Common myeloid progenitor, CD34-positive (primary cell): ENCODE measurements at regions of chr5 and their contacts with region 1.

Region 1: DNA sequence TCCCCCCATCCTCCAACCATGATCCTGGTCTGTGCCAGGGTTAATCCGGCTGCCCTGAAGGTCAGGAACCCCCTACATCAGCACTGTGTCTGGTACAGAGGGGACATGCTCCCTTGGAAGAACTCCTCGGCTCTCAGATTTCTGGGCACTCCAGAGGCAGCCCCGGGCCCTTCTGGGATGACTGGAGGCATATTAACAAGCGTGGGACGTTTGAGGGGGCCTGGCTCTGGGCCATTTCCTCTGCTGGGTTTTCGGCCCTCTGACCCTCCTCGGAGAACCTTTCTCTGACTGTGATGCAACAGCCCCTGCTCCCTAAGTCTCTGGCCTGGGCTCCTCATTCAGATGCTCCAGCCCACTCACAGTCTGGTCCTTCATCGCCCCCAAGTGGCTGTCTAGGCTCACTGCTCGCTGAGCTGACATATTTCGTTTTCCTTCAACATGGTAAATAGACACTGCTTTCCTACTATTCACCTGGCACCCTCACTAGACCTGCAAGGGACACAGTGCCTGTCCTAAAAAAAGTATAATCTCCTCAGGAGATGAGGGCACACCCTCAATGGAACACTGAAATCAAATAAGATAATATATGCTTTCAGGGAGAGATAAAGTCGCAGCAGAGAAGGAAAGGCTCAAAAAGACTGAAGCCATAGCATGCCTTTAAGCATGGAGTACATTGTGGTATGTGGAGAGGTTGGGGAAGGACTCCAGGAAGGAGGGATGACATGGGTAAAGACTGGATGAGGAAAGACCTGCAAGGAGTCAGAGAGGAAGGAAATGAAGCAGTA is 404.7 kb upstream of the TRPC7 start:
- DNase-seq: peak; percentile 40 to 74 (median 67)
- H3K4me3 ChIP-seq: no peak overlapping the region
- H3K27ac ChIP-seq: no peak overlapping the region
- H3K4me1 ChIP-seq: no peaks in the 10 kb centered on the region
- H3K27me3 ChIP-seq: peaks cover 0 to 15% (median 0%) of the 10 kb centered on the region in 5 experiments

Region 2: DNA sequence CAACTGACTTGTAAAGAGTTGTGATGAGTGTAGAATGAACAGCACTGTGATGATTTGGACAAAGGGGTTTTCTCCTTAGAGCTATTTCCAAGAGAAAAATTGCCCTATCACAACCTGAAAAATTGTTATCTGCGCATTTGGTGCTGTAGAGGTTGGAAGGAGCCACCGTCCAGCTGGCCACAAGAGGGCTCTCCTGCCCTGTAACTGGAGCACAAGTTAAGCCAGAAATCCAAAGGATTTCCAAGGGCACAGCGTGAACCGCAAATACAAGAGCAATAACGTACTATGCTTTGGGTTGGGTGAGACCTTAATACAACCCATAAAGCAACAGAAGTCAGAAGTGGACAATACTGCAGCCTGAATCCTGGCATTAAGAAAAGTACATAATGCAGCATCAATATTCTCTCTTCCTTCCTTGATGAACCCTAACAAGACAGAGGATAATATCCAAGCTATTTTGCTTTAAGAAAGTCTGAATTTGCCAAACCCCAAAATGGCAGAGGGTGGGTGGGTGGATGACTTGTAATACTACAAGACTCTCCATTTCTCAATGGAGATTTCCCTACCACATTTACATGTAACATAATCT is 520.3 kb before region 1 on chr5:
- CTCF ChIA-PET with region 1: interaction called, 33 read pairs
- POLR2A ChIA-PET with region 1: no interaction called
- DNase-seq: peak; percentile 29 to 57 (median 52)
- H3K4me3 ChIP-seq: no peak overlapping the region
- H3K27ac ChIP-seq: no peak overlapping the region
- H3K4me1 ChIP-seq: no peaks in the 10 kb centered on the region
- H3K27me3 ChIP-seq: peaks cover 0 to 6% (median 4%) of the 10 kb centered on the region in 5 experiments

Region 3: DNA sequence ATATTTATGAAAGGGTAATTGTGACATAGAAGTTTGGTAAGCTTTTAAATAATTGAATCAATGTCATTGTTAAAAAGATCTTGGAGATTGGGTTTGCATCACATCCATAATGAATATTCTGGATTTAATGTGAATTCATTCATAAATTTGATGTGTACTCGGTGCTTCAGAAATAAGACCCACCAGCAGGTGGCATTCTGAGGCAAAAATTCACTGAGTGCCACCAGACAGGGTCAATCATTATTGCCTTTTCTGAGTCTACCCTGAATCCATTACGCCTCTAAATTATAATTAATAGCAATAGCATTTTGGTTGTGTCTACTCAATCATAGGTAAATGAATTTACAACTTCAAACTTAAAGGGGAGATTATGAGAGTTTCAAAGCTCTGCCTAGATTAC is 405.8 kb before region 1 on chr5:
- CTCF ChIA-PET with region 1: interaction called, 64 read pairs
- POLR2A ChIA-PET with region 1: no interaction called
- DNase-seq: peak in 2 of 3 donors; percentile 4 to 11
- H3K4me3 ChIP-seq: no peak overlapping the region
- H3K27ac ChIP-seq: no peak overlapping the region
- H3K4me1 ChIP-seq: no peaks in the 10 kb centered on the region
- H3K27me3 ChIP-seq: peaks cover 0 to 12% (median 4%) of the 10 kb centered on the region in 5 experiments

Region 4: DNA sequence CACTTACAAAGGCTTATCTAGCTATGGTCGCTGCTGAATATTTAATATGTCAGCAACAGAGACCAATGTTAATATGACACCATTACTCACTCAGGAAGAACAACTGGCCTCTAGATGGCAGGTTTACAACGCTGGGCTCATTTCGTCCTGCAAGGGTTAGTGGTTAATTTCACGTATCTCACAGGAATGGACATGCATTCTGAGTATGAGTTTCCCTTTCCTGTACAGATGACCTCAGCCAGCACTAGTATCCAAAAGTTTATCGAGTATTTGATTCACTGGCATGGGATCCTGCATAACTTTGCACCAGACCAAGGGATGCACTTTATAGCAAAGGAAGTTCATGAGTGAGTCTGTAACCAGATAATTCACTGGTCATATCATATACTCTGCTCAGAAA is 396.1 kb before region 1 on chr5:
- CTCF ChIA-PET with region 1: interaction called, 39 read pairs
- POLR2A ChIA-PET with region 1: interaction called, 3 read pairs
- DNase-seq: peak; percentile 13 to 47 (median 46)
- H3K4me3 ChIP-seq: no peak overlapping the region
- H3K27ac ChIP-seq: no peak overlapping the region
- H3K4me1 ChIP-seq: no peaks in the 10 kb centered on the region
- H3K27me3 ChIP-seq: peaks cover 0 to 3% (median 0%) of the 10 kb centered on the region in 5 experiments

Region 5: DNA sequence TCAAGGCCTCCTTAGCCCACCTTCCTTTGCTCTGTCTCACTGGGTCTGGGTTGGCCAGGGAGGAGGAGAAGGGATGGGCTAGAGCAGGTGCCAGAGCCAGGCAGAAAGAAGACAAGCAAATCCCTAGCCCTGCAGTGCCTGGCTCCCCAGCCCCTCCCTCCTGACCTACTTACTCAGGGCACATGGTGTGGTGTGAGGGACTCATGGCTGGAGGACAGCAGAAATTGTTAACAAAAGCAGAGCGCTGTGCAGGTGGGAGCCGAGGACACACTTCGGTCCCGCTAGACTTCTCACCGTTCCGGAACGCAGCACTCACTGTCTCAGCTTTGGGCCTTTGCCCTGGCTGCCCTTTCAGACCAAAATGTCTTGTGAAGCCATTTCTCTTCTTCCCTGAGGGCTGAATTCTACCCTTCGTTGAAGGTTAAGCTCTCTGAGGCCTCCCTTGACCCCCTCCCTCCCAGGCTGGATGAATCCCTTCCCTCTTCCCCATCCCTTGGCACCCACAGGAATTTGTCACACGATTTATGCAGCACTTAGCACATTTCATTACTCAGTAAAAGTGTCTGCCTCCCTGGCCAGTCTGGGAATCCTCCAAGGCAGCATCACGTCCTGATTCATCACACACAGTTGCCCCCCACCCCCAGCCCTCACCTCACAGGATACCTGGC is 140.8 kb before region 1 on chr5:
- CTCF ChIA-PET with region 1: no interaction called
- POLR2A ChIA-PET with region 1: no interaction called
- DNase-seq: no peak
- H3K4me3 ChIP-seq: no peak overlapping the region
- H3K27ac ChIP-seq: no peak overlapping the region
- H3K4me1 ChIP-seq: peaks cover 0 to 5% (median 2%) of the 10 kb centered on the region in 4 experiments
- H3K27me3 ChIP-seq: no peaks in the 10 kb centered on the region

Region 6: GRCh38 chr5:136811551-136811950 is 41.5 kb after region 1 on chr5:
- CTCF ChIA-PET with region 1: no interaction called
- POLR2A ChIA-PET with region 1: no interaction called
- DNase-seq: no peak
- H3K4me3 ChIP-seq: no peak overlapping the region
- H3K27ac ChIP-seq: no peak overlapping the region
- H3K4me1 ChIP-seq: no peaks in the 10 kb centered on the region
- H3K27me3 ChIP-seq: no peaks in the 10 kb centered on the region